Activated T-helper 2 cell treated with anti-CD3 and anti-CD28 coated beads, Interferon-gamma antibody, Interleukin-2, Interleukin-4, amounts not matched to agents 10 μg/mL and 5 μg/mL and 100 μg/mL, durations not matched to agents 14 hours and 24 hours and 36 hours (primary cell): ENCODE measurements at regions of chr9 and their contacts with region 1.

Region 1: GRCh38 chr9:105414947-105415661 is 32.7 kb upstream of the FSD1L start:
- DNase-seq: peak; percentile 29
- H3K4me3 Mint-ChIP-seq: no peak overlapping the region
- H3K27ac Mint-ChIP-seq: no peak overlapping the region
- H3K4me1 Mint-ChIP-seq: peaks cover 7% of the 10 kb centered on the region
- H3K27me3 Mint-ChIP-seq: peaks cover 43% of the 10 kb centered on the region

Region 2: DNA sequence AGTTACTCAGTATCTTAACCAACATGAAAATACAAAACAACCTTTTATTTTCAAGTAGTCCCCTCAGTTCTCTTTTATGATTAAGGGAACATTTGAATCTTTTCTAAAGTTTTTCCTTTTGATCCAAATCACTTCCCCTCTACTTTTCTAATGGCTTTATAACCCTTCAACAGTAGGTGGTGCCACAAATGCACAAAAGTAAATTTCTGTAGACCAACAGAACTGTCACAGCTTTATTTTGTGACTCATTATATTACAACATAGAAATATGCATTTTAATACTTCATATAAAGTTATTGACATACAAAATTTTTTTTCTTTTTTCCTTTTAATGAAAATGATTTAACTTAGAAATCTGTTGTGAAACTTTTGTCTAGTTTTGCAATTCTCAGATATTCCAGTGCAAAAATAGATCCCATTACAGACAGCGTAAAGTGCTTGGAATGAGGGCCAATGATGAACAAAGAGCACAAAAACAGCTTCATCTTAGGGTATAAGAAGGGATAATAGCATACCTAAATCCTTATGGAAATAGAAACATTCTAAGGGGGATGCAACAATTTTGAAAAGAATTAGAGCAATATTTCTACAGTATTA is 634.2 kb before region 1 on chr9:
- intact Hi-C with region 1: loop called (anchors 5 kb)
- DNase-seq: no peak
- H3K4me3 Mint-ChIP-seq: no peak overlapping the region
- H3K27ac Mint-ChIP-seq: no peak overlapping the region
- H3K4me1 Mint-ChIP-seq: no peaks in the 10 kb centered on the region
- H3K27me3 Mint-ChIP-seq: peaks cover 11% of the 10 kb centered on the region

Region 3: DNA sequence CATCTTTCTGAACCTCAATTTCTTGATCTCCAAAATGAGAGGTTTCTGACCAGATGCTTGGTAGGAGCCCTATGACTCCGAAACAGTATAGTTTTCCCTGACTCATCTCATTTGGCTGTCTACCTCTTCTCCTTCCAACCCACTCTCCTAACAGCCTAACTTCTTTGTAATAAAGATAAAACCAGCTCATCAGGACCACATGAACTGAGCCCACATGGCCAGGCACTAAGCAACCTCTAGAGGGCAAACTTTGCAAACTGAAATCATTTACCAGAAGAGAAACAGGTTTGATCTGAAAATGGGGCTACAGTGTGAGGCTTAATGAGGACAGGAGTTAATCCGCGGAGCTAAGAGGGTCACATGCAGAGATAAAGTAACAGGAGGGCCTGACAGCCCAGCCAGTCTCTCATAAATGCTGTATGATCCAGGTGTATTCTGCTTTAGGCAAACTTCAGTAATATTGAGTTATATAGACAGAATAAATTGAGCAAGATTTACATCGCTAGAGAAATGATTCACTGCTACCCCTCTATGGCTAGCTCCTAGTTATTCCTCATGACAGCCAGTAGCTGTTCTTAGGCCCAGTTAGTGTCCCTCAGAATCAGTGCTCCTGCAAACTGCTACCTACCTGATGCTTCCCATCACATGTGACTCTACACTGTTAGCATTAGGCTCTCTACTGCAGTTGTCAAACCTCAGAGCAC is 551.8 kb before region 1 on chr9:
- intact Hi-C with region 1: loop called (anchors 2 kb)
- DNase-seq: peak; percentile 11
- H3K4me3 Mint-ChIP-seq: no peak overlapping the region
- H3K27ac Mint-ChIP-seq: no peak overlapping the region
- H3K4me1 Mint-ChIP-seq: no peaks in the 10 kb centered on the region
- H3K27me3 Mint-ChIP-seq: no peaks in the 10 kb centered on the region

Region 4: DNA sequence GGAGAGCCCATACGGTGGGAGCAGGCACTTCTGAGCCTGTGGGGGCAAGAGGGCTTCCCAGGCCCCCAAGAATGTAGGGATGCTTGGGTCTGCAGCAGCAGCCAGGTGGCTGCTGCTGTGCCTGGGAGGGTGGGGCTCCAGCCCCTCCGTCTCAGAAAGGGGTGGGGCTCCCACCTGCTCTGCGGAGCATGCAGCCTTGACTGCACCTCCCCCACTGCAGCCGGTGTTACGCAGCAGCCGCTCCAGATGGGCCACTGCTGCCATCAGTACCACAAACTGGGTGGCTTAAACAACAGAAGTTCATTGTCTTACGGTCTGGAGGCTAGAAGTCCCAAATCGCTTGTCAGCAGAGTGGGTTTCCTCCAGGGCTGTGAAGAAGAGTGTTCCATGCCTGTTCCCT is 644.8 kb after region 1 on chr9:
- intact Hi-C with region 1: no loop called
- DNase-seq: no peak
- H3K4me3 Mint-ChIP-seq: no peak overlapping the region
- H3K27ac Mint-ChIP-seq: no peak overlapping the region
- H3K4me1 Mint-ChIP-seq: no peaks in the 10 kb centered on the region
- H3K27me3 Mint-ChIP-seq: no peaks in the 10 kb centered on the region